ENCODE measurements at regions of chr1 and their contacts with region 1.

Region 1: DNA sequence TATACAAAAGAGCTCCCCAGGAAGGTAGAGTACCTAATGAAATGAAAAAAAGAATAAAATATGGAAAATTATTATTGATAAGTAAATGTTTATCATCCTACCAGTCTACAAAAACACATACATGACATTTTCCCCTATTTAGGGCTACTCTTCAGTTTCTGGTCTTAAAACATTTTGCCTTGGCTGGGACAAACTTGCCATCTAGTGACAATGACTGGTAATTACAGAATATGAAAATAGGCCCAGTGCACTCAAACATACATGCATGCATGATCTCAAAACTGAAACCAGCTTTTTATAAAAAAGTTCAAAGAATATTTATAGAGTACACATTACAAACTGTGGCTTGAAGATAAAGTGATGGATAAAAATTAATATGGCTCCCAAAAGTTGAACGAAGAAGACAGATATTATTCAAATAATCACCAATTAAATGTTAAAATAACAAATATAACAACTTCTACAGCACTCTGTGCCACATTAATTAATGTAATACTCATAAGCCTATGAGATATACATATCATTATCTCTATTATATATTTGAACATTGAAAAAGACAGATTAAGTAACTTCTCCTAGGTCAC is 10.5 kb upstream of the RNPC3 start:
- DNase-seq: no peak
- H3K4me3 ChIP-seq: no peak overlapping the region
- H3K27ac ChIP-seq: no peak overlapping the region
- H3K4me1 ChIP-seq: no peaks in the 10 kb centered on the region
- H3K27me3 ChIP-seq: no peaks in the 10 kb centered on the region
- CTCF ChIP-seq: peak in 2 of 3 experiments; percentile 44 to 61; a peak in 2 of 4 replicates
- EP300 ChIP-seq: no peak
- POLR2A ChIP-seq: no peak
- RAD21 ChIP-seq: peak; percentile 86 to 88

Region 2: GRCh38 chr1:103525607-103526507 is 10.8 kb after region 1 on chr1 and contains the start of gene RNPC3:
- CTCF ChIA-PET with region 1: interaction called, 26 read pairs
- POLR2A ChIA-PET with region 1: no interaction called
- DNase-seq: peak; percentile 31 to 82
- H3K4me3 ChIP-seq: peak within 1 kb of the TSS; percentile 92 to 99 (median 96)
- H3K27ac ChIP-seq: peak within 1 kb of the TSS; percentile 93
- H3K4me1 ChIP-seq: peaks cover 0 to 2% (median 0%) of the 10 kb centered on the region in 4 experiments; a peak in 1 of 7 replicates
- H3K27me3 ChIP-seq: no peaks in the 10 kb centered on the region
- CTCF ChIP-seq: no peak
- EP300 ChIP-seq: no peak
- POLR2A ChIP-seq: peak; percentile 43 to 60
- RAD21 ChIP-seq: 0 out of 4 replicates have a peak, but pooled peaks of 1 of the 2 experiments have one; percentile 12
- total RNA-seq, gene RNPC3: 12.0 and 12.8 TPM in 2 replicates

Measured in H1 (cell line).